ENCODE measurements at regions of chr2 and their contacts with region 1.

Region 1: GRCh38 chr2:160505256-160505655 is 11.6 kb upstream of the RBMS1 start:
- DNase-seq: no peak
- H3K4me3 ChIP-seq: no peak overlapping the region
- H3K27ac ChIP-seq: no peak overlapping the region
- H3K4me1 ChIP-seq: peaks cover 0 to 10% (median 2%) of the 10 kb centered on the region in 4 donors
- H3K27me3 ChIP-seq: no peaks in the 10 kb centered on the region
- CTCF ChIP-seq: no peak
- EP300 ChIP-seq: no peak
- POLR2A ChIP-seq: no peak

Region 2: GRCh38 chr2:159595410-159596046 is 909.7 kb before region 1 on chr2:
- intact Hi-C with region 1: no loop called
- DNase-seq: no peak
- H3K4me3 ChIP-seq: no peak overlapping the region
- H3K27ac ChIP-seq: no peak overlapping the region
- H3K4me1 ChIP-seq: peaks cover 3 to 14% (median 8%) of the 10 kb centered on the region in 4 donors
- H3K27me3 ChIP-seq: no peaks in the 10 kb centered on the region
- CTCF ChIP-seq: no peak
- EP300 ChIP-seq: no peak
- POLR2A ChIP-seq: no peak

Region 3: DNA sequence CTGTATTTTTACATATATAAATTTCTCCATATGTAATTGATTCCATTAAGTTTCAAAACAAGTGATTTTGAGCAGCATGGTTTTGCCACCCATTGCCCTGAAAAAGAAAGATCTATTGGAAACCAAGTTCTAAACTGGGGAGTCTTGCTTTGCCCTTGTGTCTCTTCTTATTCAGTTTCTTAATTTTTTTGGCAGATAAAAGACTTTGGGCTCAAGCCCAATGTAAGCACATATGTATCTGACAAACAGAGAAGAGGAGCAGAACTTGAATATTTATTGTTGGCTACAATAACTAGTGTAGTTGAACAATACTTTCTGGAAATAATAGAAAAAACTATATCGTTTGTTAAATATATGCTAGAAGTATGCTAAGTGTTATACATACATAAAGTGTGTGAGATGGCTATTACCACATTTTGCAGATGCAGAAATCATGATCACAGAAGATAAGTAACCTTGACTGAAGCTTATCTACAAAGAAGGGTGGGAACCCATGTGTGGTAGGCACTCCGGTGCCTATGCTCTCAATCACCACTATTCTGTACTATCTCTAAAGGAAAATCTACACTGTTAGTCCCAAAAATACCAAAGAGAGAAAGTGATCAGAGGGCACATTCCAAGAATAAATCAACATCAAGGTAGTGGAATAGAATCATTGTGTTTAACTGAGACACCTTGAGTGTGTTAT is 552.0 kb before region 1 on chr2:
- intact Hi-C with region 1: no loop called
- DNase-seq: no peak
- H3K4me3 ChIP-seq: no peak overlapping the region
- H3K27ac ChIP-seq: no peak overlapping the region
- H3K4me1 ChIP-seq: peaks cover 4 to 9% (median 6%) of the 10 kb centered on the region in 4 donors
- H3K27me3 ChIP-seq: no peaks in the 10 kb centered on the region
- CTCF ChIP-seq: no peak
- EP300 ChIP-seq: no peak
- POLR2A ChIP-seq: no peak

Region 4: GRCh38 chr2:160324161-160324800 is 181.0 kb before region 1 on chr2:
- intact Hi-C with region 1: loop called (anchors 10 kb)
- DNase-seq: no peak
- H3K4me3 ChIP-seq: no peak overlapping the region
- H3K27ac ChIP-seq: no peak overlapping the region
- H3K4me1 ChIP-seq: peaks cover 59 to 93% (median 87%) of the 10 kb centered on the region in 4 donors
- H3K27me3 ChIP-seq: no peaks in the 10 kb centered on the region
- CTCF ChIP-seq: peak; percentile 71 to 80 (median 72)
- EP300 ChIP-seq: no peak
- POLR2A ChIP-seq: no peak